ENCODE measurements at regions of chr3 and their contacts with region 1.

Region 1: GRCh38 chr3:43998836-43999727 is 242.6 kb upstream of the TOPAZ1 start:
- DNase-seq: peak; percentile 69 to 90
- H3K4me3 ChIP-seq: peak overlapping the region; percentile 70
- H3K27ac ChIP-seq: peak overlapping the region; percentile 88
- H3K4me1 ChIP-seq: peaks cover 22% of the 10 kb centered on the region
- H3K27me3 ChIP-seq: no peaks in the 10 kb centered on the region
- CTCF ChIP-seq: no peak

Region 2: DNA sequence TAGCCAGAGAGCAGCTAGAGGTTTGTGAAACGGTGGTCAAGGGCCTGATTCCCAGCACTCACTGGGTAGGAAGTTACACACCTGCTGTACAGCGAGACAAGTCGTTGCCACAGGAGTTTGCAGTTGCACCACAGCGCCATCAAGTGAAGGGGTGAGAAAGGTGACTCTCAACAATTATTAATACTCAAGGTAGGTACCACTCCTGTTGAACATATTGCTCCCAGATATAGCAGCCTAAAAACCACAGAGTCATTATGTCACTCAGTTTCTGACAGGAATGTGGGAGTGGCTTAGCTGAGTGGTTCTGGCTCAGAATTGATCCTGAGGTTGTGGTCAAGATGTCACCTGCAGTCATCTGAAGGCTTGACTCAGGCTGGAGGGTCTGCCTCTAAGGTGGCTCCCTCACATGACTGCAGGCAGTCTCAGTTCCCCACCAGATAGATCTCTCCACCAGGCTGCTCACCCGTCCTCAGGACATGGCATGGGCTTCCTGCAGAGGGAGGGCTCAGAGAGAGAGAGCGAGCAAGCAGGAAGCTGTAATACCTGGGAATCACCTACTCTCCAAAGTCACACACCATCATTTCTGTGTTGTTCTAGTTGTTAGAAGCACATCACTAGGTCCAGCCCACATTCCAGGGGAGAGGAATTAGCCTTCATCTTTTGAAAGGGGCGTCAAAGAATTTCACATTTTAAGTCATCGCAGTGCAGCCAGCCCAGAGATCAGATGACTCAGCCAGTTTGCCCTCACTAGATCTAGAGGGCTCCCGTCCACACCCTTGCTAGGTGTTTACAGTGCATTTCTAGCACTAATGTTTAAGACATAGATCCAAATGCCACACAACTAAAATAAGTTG is 360.3 kb before region 1 on chr3:
- CTCF ChIA-PET with region 1: no interaction called
- POLR2A ChIA-PET with region 1: no interaction called
- intact Hi-C with region 1: loop called (anchors 10 kb)
- DNase-seq: peak; percentile 70 to 85
- H3K4me3 ChIP-seq: peak overlapping the region; percentile 18; the same call in 1 of the 2 replicates
- H3K27ac ChIP-seq: peak overlapping the region; percentile 78
- H3K4me1 ChIP-seq: peaks cover 23% of the 10 kb centered on the region
- H3K27me3 ChIP-seq: no peaks in the 10 kb centered on the region
- CTCF ChIP-seq: peak; percentile 59

Region 3: GRCh38 chr3:43879166-43879565 is 119.9 kb before region 1 on chr3:
- CTCF ChIA-PET with region 1: no interaction called
- POLR2A ChIA-PET with region 1: no interaction called
- intact Hi-C with region 1: loop called (anchors 2 kb)
- DNase-seq: peak; percentile 63 to 76
- H3K4me3 ChIP-seq: no peak overlapping the region
- H3K27ac ChIP-seq: peak overlapping the region; percentile 41; the same call in 1 of the 2 replicates
- H3K4me1 ChIP-seq: peaks cover 24% of the 10 kb centered on the region
- H3K27me3 ChIP-seq: no peaks in the 10 kb centered on the region
- CTCF ChIP-seq: peak; percentile 62

Region 4: DNA sequence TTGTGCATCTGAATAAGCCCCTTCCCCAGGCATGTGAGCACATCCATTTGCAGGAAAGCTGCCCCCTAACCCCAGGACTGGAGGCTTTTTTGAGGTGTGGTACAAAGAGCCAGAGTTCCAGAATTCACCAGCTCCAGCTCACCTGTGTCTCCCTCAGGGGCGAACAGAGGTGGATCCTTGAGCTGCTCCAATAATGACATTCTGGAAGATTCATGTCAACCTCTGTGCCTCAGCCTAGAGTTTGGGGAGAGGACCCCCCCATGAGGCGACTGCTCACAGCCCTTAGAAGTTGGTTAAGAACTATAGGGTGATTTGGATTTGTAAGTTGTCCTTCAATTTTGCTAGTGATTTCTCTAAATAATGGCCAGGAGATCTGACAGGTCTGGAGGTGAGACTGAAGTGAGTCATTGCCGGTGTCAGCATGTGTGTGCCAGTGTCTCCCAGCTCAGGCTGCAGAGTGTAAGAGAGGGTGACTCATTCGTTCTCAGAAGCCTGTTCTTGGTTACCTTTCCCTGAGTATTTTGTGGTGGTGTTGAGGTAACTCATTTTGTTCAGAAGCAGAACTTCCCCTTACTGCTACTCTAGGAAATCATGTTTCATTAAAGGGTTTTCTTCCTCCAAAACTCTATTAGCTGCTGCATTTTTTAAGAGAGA is 105.7 kb after region 1 on chr3:
- CTCF ChIA-PET with region 1: no interaction called
- POLR2A ChIA-PET with region 1: no interaction called
- intact Hi-C with region 1: loop called (anchors 1 kb)
- DNase-seq: peak; percentile 65 to 89
- H3K4me3 ChIP-seq: no peak overlapping the region
- H3K27ac ChIP-seq: peak overlapping the region; percentile 57
- H3K4me1 ChIP-seq: peaks cover 20% of the 10 kb centered on the region
- H3K27me3 ChIP-seq: no peaks in the 10 kb centered on the region
- CTCF ChIP-seq: no peak